H1 (cell line): ENCODE measurements at regions of chr9 and their contacts with region 1.

Region 1: DNA sequence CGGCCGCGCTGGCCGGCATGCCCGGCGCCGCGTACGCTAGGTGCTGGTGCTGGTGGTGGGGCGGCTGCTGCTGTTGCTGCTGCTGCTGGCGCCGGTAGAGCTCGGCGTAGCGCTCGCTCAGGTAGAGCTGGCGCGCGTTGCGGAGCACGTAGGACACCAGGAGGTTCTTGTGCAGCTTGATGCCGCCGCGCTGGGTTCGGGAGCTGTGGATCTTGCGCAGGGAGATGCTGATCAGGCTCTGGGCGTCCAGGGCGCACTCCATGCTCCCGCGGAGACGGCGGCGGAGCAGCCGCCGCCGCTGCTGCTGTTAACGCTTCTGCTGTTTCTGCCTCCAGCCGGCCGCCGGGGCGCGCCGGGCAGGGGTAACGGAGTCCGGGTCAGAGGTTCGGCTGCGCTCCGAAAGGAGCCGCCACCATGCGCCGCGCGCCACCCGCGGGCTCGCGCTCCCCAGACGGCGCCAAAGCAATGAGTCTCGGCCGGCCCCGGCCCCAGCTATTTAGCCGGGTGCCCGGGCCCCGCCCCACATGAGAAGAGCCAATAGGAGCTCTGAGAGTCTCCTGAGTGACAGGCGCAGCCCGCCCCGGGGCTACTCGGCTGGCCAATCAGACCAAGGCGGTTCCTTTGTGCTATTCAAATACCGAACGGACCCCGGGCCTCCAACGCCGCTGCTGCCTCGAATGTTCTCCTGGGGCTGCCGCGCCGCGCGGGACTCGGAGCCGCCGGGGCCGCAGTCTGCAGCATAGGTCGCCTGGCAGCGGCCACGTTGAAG is at the start of gene IER5L:
- DNase-seq: peak; percentile 80 to 97
- H3K4me3 ChIP-seq: peak within 1 kb of the TSS; percentile 38 to 71 (median 52)
- H3K27ac ChIP-seq: no peak within 1 kb of the TSS
- H3K4me1 ChIP-seq: peaks cover 0 to 24% (median 13%) of the 10 kb centered on the region in 4 experiments; a peak in 6 of 7 replicates
- H3K27me3 ChIP-seq: peaks cover 49 to 80% (median 72%) of the 10 kb centered on the region in 4 experiments
- CTCF ChIP-seq: no peak
- EP300 ChIP-seq: no peak
- POLR2A ChIP-seq: peak in 1 of 2 experiments; percentile 96; a peak in 2 of 3 replicates
- RAD21 ChIP-seq: no peak; a peak in 1 of 4 replicates
- total RNA-seq, gene IER5L: 1.0 and 1.2 TPM in 2 replicates

Region 2: DNA sequence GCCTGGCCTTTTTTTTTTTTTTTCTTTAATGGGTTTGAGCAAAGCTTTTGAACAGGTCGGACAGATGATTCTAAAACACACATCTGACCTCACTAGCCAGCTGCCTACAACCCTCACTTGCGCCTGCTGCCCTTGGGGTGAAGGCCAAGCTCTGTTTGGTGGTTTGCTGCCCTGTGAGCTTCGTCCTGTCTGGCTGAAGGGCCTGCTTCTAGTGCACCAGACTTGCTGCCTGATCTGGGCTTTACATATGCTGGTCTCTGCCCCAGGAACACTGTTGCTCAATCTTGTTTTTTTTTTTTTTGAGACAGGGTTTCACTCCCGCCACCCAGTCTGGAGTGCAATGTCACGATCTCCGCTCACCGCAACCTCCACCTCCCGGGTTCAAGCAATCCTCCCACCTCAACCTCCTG is 113.5 kb before region 1 on chr9:
- CTCF ChIA-PET with region 1: no interaction called
- POLR2A ChIA-PET with region 1: no interaction called
- DNase-seq: no peak
- H3K4me3 ChIP-seq: no peak overlapping the region
- H3K27ac ChIP-seq: no peak overlapping the region
- H3K4me1 ChIP-seq: no peaks in the 10 kb centered on the region
- H3K27me3 ChIP-seq: no peaks in the 10 kb centered on the region
- CTCF ChIP-seq: no peak
- EP300 ChIP-seq: no peak
- POLR2A ChIP-seq: no peak
- RAD21 ChIP-seq: no peak

Region 3: DNA sequence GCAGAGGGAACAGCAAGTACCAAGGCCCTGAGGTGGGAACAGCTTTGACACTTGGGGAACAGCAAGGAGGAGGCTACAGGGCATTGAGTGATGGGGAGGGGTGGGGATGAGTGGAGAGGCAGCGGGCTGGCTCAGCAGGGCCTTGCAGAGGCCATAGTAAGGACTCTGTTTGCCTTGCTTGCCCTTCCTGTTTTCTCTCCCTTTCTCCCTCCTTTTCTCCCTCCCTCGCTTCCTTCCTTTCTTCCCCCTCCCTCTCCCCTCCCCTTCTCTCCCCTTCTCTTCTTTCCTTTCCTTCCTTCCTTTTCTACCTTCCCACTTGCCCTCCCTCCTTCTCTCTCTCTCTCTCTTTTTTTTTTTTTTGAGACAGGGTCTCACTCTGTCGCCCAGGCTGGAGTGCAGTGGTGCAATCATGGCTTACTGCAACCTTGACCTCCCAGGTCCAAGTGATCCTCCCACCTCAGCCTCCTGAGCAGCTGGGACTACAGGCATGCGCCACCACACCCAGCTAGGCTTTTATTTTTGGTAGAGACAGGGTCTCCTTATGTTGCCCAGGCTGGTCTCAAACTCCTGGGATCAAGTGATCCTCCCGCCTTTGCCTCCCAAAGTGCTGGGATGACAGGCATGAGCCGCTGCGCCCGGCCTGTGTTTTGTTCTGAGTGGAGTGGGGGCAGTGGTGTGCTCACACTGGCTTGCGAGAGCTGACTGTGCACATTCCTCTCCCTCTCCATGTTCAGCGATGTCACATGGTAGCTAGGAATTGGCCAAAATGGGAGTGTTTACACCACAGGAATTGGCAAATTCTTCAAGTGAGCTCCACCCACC is 17.1 kb before region 1 on chr9:
- CTCF ChIA-PET with region 1: interaction called, 831 read pairs
- POLR2A ChIA-PET with region 1: interaction called, 30 read pairs
- DNase-seq: no peak
- H3K4me3 ChIP-seq: no peak overlapping the region
- H3K27ac ChIP-seq: no peak overlapping the region
- H3K4me1 ChIP-seq: peaks cover 0 to 3% (median 1%) of the 10 kb centered on the region in 4 experiments; a peak in 1 of 7 replicates
- H3K27me3 ChIP-seq: no peaks in the 10 kb centered on the region; a peak in 1 of 7 replicates
- CTCF ChIP-seq: no peak
- EP300 ChIP-seq: no peak
- POLR2A ChIP-seq: no peak
- RAD21 ChIP-seq: no peak

Region 4: GRCh38 chr9:129208207-129209032 is 30.4 kb after region 1 on chr9:
- CTCF ChIA-PET with region 1: interaction called, 12 read pairs
- POLR2A ChIA-PET with region 1: interaction called, 22 read pairs
- DNase-seq: peak; percentile 51 to 85
- H3K4me3 ChIP-seq: peak overlapping the region; percentile 51 to 83 (median 66)
- H3K27ac ChIP-seq: peak overlapping the region; percentile 69
- H3K4me1 ChIP-seq: peaks cover 0 to 14% (median 8%) of the 10 kb centered on the region in 4 experiments; a peak in 6 of 7 replicates
- H3K27me3 ChIP-seq: peaks cover 0 to 9% (median 4%) of the 10 kb centered on the region in 4 experiments; a peak in 4 of 7 replicates
- CTCF ChIP-seq: no peak
- EP300 ChIP-seq: no peak
- POLR2A ChIP-seq: no peak
- RAD21 ChIP-seq: no peak

Region 5: DNA sequence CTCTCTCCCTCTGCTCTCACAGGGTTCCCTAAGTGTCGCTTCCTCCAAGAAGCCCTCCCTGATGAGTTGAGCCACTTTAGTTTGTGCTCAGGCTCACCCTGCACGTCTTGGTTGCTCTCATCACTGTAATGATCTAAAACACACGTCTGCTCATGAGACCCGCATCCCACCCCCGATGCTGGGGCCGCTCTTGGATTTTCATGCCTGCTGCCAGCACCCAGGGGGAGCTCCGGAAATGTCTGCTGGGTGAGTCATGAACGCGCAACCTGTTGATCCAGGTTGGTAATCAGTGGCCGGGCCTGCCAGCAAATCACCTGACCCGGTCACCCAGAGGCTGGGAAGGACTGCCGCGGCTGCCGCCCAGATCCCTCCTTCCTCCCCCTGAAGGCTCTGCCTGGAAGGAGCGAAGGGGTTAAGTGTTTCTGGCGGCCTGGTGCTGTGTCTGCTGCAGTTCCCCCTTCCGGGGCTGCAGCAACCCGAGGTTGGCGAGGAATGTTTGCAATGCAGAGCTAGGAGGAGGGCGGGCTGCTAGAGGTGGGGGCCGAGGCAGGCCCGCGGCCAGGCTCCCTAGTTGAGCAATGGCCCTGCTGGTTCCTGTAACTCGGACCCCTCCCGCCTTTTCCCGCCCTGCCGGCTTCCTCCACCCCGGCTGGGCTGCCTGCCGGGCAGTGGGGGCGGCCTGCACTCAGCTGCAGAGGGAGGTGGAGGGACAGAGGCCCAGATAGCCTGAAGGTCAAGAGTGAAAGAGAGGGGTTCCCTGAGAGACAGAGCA is 156.2 kb after region 1 on chr9:
- CTCF ChIA-PET with region 1: interaction called, 10 read pairs
- POLR2A ChIA-PET with region 1: interaction called, 29 read pairs
- DNase-seq: peak; percentile 87 to 94
- H3K4me3 ChIP-seq: peak overlapping the region in 3 of 4 experiments; percentile 23 to 49 (median 40); a peak in 6 of 8 replicates
- H3K27ac ChIP-seq: peak overlapping the region; percentile 92
- H3K4me1 ChIP-seq: peaks cover 8 to 40% (median 34%) of the 10 kb centered on the region in 4 experiments
- H3K27me3 ChIP-seq: 0 out of 7 replicates have a peak, but pooled peaks cover 0 to 2% (median 0%) of the 10 kb centered on the region in 4 experiments
- CTCF ChIP-seq: peak in 1 of 3 experiments; percentile 7; a peak in 1 of 4 replicates
- EP300 ChIP-seq: peak in 1 of 2 experiments; percentile 92; a peak in 1 of 3 replicates
- POLR2A ChIP-seq: peak in 1 of 2 experiments; percentile 43; a peak in 1 of 3 replicates
- RAD21 ChIP-seq: peak in 1 of 2 experiments; percentile 35; a peak in 2 of 4 replicates

Region 6: DNA sequence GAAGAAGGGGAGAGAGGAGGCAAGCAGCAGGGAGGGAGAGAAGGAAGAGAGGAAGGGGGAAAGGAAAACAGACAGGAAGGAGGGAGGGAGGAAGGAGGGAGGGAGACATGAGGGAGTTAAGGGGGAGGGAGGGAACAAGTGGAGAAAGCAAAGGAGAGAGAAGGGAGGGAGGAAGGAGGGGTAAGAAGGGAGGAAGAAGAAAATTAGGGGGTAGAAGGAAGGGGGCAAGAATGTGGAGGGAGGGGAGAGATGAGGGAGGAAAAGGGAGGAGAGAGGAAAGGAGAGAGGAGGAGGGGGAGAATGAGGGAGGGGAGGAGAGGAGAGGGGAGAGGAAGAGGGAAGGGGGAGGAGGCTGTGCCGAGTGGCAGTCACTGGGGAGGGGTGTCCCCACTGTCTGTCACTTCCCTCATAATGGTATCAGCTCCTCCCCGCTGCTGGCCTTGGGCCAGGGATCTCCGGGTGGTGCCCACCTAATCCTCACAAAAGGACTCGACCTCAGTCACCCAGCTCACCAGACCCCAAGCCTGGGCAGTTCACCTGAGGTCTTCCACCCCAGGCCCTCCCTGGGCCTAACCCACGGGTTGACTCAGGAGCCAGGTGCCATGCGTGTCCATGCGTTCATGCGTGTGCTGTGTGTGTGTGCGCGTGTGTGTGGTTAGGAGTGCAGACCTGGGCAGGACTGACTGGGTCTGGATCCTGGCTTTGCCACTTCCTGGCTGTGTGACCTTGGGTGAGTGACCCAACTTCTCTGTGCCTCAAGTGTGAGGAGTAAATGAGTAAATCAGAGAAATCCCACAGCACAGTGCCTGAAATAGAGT is 424.8 kb after region 1 on chr9:
- CTCF ChIA-PET with region 1: interaction called, 19 read pairs
- POLR2A ChIA-PET with region 1: interaction called, 10 read pairs
- DNase-seq: no peak
- H3K4me3 ChIP-seq: no peak overlapping the region
- H3K27ac ChIP-seq: no peak overlapping the region
- H3K4me1 ChIP-seq: peaks cover 0 to 13% (median 12%) of the 10 kb centered on the region in 4 experiments; a peak in 6 of 7 replicates
- H3K27me3 ChIP-seq: peaks cover 0 to 12% (median 9%) of the 10 kb centered on the region in 4 experiments; a peak in 5 of 7 replicates
- CTCF ChIP-seq: no peak
- EP300 ChIP-seq: no peak
- POLR2A ChIP-seq: no peak
- RAD21 ChIP-seq: peak in 1 of 2 experiments; percentile 6; a peak in 1 of 4 replicates